Sigmoid colon (tissue), 7 donors: ENCODE measurements at regions of chr22 and their contacts with region 1.

Region 1: GRCh38 chr22:47340851-47341436 is 578.5 kb downstream of the TBC1D22A start:
- DNase-seq: no peak
- H3K4me3 ChIP-seq: no peak overlapping the region
- H3K27ac ChIP-seq: no peak overlapping the region
- H3K4me1 ChIP-seq: no peaks in the 10 kb centered on the region
- H3K27me3 ChIP-seq: peaks cover 0 to 13% (median 0%) of the 10 kb centered on the region in 3 donors
- CTCF ChIP-seq: no peak
- EP300 ChIP-seq: no peak
- POLR2A ChIP-seq: no peak

Region 2: GRCh38 chr22:47281126-47282106 is 59.5 kb before region 1 on chr22:
- intact Hi-C with region 1: loop called (anchors 10 kb)
- DNase-seq: no peak
- H3K4me3 ChIP-seq: no peak overlapping the region
- H3K27ac ChIP-seq: no peak overlapping the region
- H3K4me1 ChIP-seq: no peaks in the 10 kb centered on the region
- H3K27me3 ChIP-seq: peaks cover 0 to 22% (median 6%) of the 10 kb centered on the region in 3 donors
- CTCF ChIP-seq: no peak
- EP300 ChIP-seq: no peak
- POLR2A ChIP-seq: no peak

Region 3: GRCh38 chr22:47307326-47307725 is 33.6 kb before region 1 on chr22:
- intact Hi-C with region 1: no loop called
- DNase-seq: no peak
- H3K4me3 ChIP-seq: no peak overlapping the region
- H3K27ac ChIP-seq: no peak overlapping the region
- H3K4me1 ChIP-seq: no peaks in the 10 kb centered on the region
- H3K27me3 ChIP-seq: no peaks in the 10 kb centered on the region
- CTCF ChIP-seq: no peak
- EP300 ChIP-seq: no peak
- POLR2A ChIP-seq: no peak

Region 4: DNA sequence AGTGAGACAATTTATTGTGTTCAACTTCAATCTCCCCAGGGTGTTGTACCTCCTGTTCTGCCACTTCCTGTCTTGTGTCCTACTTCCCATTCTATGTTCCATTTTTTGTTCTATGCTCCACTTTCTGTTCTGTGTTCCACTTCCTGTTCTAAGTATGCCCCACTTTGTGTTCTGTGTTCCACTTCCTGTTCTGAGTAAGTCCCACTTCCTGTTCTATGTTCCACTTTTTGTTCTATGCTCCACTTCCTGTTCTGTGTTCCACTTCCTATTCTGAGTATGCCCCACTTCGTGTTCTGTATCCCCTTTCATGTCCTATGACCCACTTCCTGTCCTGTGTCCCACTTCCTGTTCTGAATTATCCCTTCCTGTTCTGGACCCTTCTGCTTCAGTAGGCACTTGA is 154.2 kb after region 1 on chr22:
- intact Hi-C with region 1: no loop called
- DNase-seq: no peak
- H3K4me3 ChIP-seq: no peak overlapping the region
- H3K27ac ChIP-seq: no peak overlapping the region
- H3K4me1 ChIP-seq: no peaks in the 10 kb centered on the region
- H3K27me3 ChIP-seq: peaks cover 0 to 4% (median 0%) of the 10 kb centered on the region in 3 donors
- CTCF ChIP-seq: no peak
- EP300 ChIP-seq: no peak
- POLR2A ChIP-seq: no peak